Esophagus squamous epithelium (tissue), 5 donors: ENCODE measurements at regions of chr17 and their contacts with region 1.

Region 1: GRCh38 chr17:34980681-34981537 is 597 bp downstream of the LIG3 start:
- DNase-seq: peak; percentile 20
- H3K4me3 ChIP-seq: peak overlapping the region; percentile 90 to 98 (median 96)
- H3K27ac ChIP-seq: peak overlapping the region; percentile 99 to 100 (median 100)
- H3K4me1 ChIP-seq: peaks cover 10 to 47% (median 11%) of the 10 kb centered on the region in 3 donors
- H3K27me3 ChIP-seq: no peaks in the 10 kb centered on the region
- CTCF ChIP-seq: peak in 4 of 6 experiments; percentile 30 to 44 (median 44)
- POLR2A ChIP-seq: peak in 2 of 4 donors; percentile 46 to 60

Region 2: DNA sequence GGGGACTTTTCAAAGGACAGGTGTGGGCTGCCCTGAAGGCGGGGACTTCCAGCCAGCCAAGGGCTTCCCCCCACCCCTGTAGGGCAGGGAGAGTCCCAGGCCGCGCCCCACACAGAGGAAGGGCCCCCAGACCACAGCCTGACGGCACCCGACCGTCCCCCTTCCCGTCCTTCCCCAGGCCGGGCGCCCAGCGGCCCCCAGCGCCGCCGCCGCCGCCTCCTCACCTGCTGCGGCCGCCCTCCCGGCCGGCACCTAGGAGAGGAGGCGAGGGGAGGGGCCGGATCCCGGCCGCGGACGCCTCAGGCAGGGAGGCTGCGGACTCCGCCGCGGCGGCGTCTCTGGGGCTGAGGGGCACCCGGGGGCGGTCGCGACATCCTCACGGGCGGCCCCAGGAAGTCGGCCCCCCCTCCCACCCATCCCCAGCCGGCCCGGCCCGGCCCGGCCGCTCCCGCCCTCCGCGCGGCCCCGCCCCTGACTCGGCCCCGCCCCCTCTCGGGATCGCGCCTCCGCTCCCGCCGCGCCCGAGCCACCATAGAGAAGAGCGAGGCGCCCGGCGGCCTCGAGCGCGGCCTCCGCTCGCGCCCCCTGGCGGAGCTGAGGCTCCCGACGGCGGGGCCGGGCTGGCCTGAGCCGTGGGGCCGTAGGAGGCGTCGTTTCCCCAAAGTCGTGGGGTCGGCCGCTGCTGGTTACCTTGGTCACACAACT is 108.1 kb after region 1 on chr17:
- intact Hi-C with region 1: loop called (anchors 5 kb)
- DNase-seq: peak; percentile 20
- H3K4me3 ChIP-seq: peak overlapping the region; percentile 67 to 87 (median 78)
- H3K27ac ChIP-seq: peak overlapping the region; percentile 91 to 97 (median 95)
- H3K4me1 ChIP-seq: peaks cover 11 to 52% (median 15%) of the 10 kb centered on the region in 3 donors
- H3K27me3 ChIP-seq: no peaks in the 10 kb centered on the region
- CTCF ChIP-seq: peak; percentile 72 to 95 (median 92)
- POLR2A ChIP-seq: peak in 2 of 4 donors; percentile 46 to 77

Region 3: GRCh38 chr17:35148144-35148543 is 167.2 kb after region 1 on chr17:
- intact Hi-C with region 1: no loop called
- DNase-seq: no peak
- H3K4me3 ChIP-seq: no peak overlapping the region
- H3K27ac ChIP-seq: no peak overlapping the region
- H3K4me1 ChIP-seq: no peaks in the 10 kb centered on the region
- H3K27me3 ChIP-seq: no peaks in the 10 kb centered on the region
- CTCF ChIP-seq: no peak
- POLR2A ChIP-seq: no peak